Right cardiac atrium (tissue), 5 donors: ENCODE measurements at regions of chr10 and their contacts with region 1.

Region 1: GRCh38 chr10:13891128-13892000 is 304.6 kb downstream of the PRPF18 start:
- DNase-seq: peak in 2 of 3 donors; percentile 75 to 78
- ATAC-seq: peak; percentile 64 to 71
- H3K4me3 ChIP-seq: peak overlapping the region; percentile 99
- H3K27ac ChIP-seq: peak overlapping the region; percentile 90
- H3K4me1 ChIP-seq: peaks cover 19% of the 10 kb centered on the region
- H3K27me3 ChIP-seq: no peaks in the 10 kb centered on the region

Region 2: DNA sequence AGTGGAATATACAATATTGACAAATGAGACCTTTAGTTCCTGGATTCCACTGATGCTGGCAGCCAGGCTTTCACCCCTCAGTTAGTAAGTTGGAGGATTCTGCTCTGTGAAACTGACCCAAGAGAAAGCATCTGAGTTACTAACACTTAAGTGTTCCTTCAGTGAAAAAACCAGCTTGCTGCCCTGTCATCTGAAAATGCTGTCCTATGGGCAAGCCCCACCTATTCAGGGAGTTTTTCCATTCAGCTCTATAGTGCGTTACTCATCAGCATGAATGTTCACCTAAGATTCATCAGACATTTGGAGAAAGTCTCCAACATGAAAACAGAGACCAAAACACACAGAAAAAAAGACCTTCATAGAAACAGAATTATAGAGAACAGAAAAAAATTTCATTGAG is 266.7 kb before region 1 on chr10:
- intact Hi-C with region 1: no loop called
- DNase-seq: no peak
- ATAC-seq: no peak
- H3K4me3 ChIP-seq: no peak overlapping the region
- H3K27ac ChIP-seq: no peak overlapping the region
- H3K4me1 ChIP-seq: no peaks in the 10 kb centered on the region
- H3K27me3 ChIP-seq: no peaks in the 10 kb centered on the region

Region 3: GRCh38 chr10:13839430-13839990 is 51.9 kb before region 1 on chr10:
- intact Hi-C with region 1: loop called in 1 of 4 experiments (anchors 5 kb)
- DNase-seq: peak; percentile 64 to 71 (median 64)
- ATAC-seq: peak; percentile 27 to 66
- H3K4me3 ChIP-seq: no peak overlapping the region
- H3K27ac ChIP-seq: peak overlapping the region; percentile 14
- H3K4me1 ChIP-seq: peaks cover 27% of the 10 kb centered on the region
- H3K27me3 ChIP-seq: no peaks in the 10 kb centered on the region